ENCODE measurements at regions of chr19 and their contacts with region 1.

Region 1: GRCh38 chr19:13604902-13605586 is 98.8 kb upstream of the CACNA1A start:
- DNase-seq: no peak
- ATAC-seq: no peak
- H3K4me3 ChIP-seq: no peak overlapping the region
- H3K27ac ChIP-seq: no peak overlapping the region
- H3K4me1 ChIP-seq: no peaks in the 10 kb centered on the region
- H3K27me3 ChIP-seq: no peaks in the 10 kb centered on the region
- CTCF ChIP-seq: no peak
- POLR2A ChIP-seq: no peak

Region 2: GRCh38 chr19:13366529-13367143 is 238.4 kb before region 1 on chr19:
- intact Hi-C with region 1: no loop called
- DNase-seq: no peak
- ATAC-seq: no peak
- H3K4me3 ChIP-seq: no peak overlapping the region
- H3K27ac ChIP-seq: no peak overlapping the region
- H3K4me1 ChIP-seq: no peaks in the 10 kb centered on the region
- H3K27me3 ChIP-seq: no peaks in the 10 kb centered on the region
- CTCF ChIP-seq: no peak
- POLR2A ChIP-seq: no peak

Region 3: DNA sequence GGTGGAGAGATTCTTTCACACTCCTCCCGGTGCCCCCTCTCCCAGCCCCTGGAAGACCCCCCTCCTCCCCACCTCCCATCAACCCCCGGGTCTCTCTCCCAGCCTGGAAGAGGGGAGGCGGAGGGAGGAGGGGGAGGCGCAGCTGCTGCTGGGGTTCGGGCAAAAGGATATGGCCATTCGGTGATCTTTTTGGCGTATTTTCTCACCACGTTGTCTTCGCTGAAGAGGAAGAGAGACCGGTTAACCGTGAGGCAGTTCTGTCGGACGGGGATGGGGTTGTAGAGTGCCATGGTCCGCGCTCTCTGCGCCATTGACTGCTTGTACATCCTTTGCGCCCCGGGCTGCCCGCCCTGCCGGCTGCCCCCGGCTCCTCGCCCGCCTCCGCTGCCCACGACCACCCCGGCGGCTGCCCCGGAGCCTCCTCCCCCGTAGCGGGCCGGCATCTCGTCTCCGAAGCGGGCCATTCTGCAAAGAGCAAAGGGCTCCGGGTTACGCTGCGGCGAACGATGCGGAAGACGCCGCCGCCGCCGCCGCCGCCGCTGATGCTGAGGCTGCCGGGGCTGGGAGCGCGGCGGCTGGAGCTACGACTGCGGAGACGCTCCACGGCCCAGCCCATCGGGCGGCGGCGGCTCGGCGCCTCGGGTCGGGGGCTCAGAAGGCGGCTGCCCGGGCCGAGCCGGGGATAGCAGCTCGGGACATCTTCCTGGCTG is 99.1 kb before region 1 on chr19:
- intact Hi-C with region 1: no loop called
- DNase-seq: peak in 1 of 4 donors; percentile 5
- ATAC-seq: no peak
- H3K4me3 ChIP-seq: no peak overlapping the region
- H3K27ac ChIP-seq: no peak overlapping the region
- H3K4me1 ChIP-seq: peaks cover 4% of the 10 kb centered on the region
- H3K27me3 ChIP-seq: peaks cover 0 to 17% of the 10 kb centered on the region in 2 donors
- CTCF ChIP-seq: no peak
- POLR2A ChIP-seq: no peak

Region 4: DNA sequence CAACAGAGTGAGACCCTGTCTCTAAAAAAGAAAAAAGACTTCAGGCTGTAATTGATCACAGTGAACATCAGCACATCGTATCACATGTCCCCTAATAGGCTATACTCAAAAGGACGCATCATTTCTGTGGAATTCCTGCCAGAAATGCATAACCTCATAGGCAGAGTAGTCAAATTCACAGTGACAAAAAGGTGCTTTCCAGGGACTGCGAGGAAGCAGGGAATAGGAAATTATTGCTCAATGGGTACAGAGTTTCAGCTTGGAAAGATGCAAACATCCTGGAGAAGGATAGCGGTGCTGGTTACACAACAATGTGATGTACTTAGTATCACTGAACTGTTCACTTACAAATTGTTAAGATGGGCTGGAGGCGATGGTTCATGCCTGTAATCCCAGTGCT is 118.2 kb after region 1 on chr19:
- intact Hi-C with region 1: loop called (anchors 5 kb)
- DNase-seq: no peak
- ATAC-seq: no peak
- H3K4me3 ChIP-seq: no peak overlapping the region
- H3K27ac ChIP-seq: no peak overlapping the region
- H3K4me1 ChIP-seq: no peaks in the 10 kb centered on the region
- H3K27me3 ChIP-seq: no peaks in the 10 kb centered on the region
- CTCF ChIP-seq: no peak
- POLR2A ChIP-seq: no peak

Region 5: DNA sequence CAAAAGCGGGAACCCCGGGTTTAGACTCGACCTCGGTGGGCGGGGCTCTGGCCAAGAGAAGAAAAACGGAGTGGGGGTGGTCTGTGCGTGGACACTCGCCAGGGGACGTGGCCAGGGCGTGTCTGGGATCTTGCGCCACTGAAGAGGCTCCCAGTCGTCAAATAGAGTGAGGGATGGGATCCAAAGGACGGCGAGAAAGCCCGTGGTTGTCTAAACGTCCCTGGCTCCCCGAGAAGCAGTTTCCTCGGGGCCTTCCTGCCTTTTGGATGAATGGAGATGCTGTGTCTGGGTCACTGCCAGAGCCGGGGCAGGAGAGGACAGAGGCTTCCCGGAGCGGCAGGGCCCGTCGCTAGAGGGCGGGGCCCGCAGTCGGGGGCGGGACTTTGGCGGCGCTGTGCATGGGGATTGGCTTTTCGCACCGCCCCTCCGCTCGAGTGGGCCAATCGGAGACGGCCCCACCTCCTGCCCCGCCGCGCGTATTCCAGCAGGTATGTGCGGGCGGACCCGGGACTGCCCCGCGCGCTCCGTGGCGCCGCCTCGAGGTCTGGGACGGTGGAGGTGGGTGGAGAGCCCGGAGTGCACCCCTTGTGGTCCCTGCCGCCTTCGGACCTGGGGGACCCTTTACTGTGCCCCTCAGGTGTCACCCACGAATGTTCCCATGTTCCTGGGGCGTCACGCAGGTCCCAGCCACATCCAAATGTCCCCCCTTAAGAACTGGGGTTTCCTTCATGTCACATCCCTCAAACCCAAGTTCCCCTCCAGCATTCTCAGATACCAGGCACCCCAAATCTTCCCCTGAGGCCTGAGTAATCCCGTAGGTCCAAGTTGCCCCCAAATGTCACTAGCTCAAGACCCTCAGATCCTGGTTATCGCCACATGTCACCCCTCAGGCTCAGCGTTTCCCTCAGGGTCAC is 228.5 kb after region 1 on chr19:
- intact Hi-C with region 1: no loop called
- DNase-seq: peak; percentile 95 to 96 (median 96)
- ATAC-seq: peak; percentile 96
- H3K4me3 ChIP-seq: no peak overlapping the region
- H3K27ac ChIP-seq: peak overlapping the region; percentile 5 to 79 (median 58)
- H3K4me1 ChIP-seq: peaks cover 36% of the 10 kb centered on the region
- H3K27me3 ChIP-seq: no peaks in the 10 kb centered on the region
- CTCF ChIP-seq: peak; percentile 35 to 62 (median 43)
- POLR2A ChIP-seq: peak in 2 of 3 donors; percentile 26 to 30

Measured in body of pancreas (tissue), 4 donors.